ENCODE measurements at regions of chr5 and their contacts with region 1.

Region 1: DNA sequence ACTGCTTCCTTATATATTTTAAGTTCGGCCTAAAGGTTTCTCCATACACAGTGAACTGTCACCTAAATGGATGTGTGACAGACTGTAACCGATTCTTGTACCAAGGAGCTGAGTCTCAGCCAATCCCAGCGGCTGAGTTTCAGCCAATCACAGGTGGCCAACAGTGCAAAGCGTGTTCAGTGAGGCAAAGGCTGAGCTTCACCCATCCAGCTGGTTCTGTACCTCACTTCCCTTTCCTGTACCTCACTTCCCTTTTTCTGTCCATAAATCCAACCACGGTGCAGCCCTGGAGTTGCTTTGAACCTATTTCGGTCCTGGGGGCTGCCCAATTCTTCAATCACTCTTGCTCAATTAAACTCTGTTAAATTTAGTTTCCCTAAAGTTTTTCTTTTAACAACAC is 15.7 kb upstream of the TBC1D9B start:
- DNase-seq: no peak
- ATAC-seq: no peak
- H3K4me3 ChIP-seq: no peak overlapping the region
- H3K27ac ChIP-seq: no peak overlapping the region
- H3K4me1 ChIP-seq: no peaks in the 10 kb centered on the region
- H3K27me3 ChIP-seq: no peaks in the 10 kb centered on the region
- CTCF ChIP-seq: no peak
- POLR2A ChIP-seq: no peak
- RAD21 ChIP-seq: no peak

Region 2: GRCh38 chr5:179678223-179679013 is 245.0 kb before region 1 on chr5:
- CTCF ChIA-PET with region 1: no interaction called
- POLR2A ChIA-PET with region 1: interaction called, 23 read pairs
- dilution Hi-C with region 1: no loop called
- in situ Hi-C with region 1: no loop called
- intact Hi-C with region 1: no loop called
- DNase-seq: peak; percentile 93
- ATAC-seq: peak; percentile 97
- H3K4me3 ChIP-seq: peak overlapping the region; percentile 69
- H3K27ac ChIP-seq: peak overlapping the region; percentile 94
- H3K4me1 ChIP-seq: peaks cover 4% of the 10 kb centered on the region
- H3K27me3 ChIP-seq: no peaks in the 10 kb centered on the region
- CTCF ChIP-seq: no peak
- POLR2A ChIP-seq: peak; percentile 67; the same call in 1 of the 2 replicates
- RAD21 ChIP-seq: peak; percentile 12; the same call in 1 of the 2 replicates

Region 3: DNA sequence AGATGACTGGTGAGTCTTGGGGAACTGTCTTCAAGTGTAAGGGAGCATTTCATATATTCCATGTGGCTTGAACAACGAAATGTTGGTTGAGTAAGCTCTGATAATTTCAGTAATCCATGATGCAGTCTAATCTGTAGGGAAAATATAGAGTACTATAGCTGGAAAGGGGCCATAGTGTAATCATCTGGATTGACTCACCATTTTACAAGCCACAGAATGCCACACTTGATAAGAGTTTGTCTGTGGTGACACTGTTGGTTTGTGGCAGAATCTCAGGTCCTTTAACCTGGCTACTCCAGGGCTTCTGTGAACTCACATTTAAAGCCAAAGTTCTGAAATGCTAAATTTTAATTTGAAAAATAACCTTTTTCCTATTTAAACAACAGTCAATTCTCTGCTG is 207.2 kb before region 1 on chr5:
- CTCF ChIA-PET with region 1: no interaction called
- POLR2A ChIA-PET with region 1: no interaction called
- dilution Hi-C with region 1: no loop called
- in situ Hi-C with region 1: no loop called
- intact Hi-C with region 1: no loop called
- DNase-seq: peak; percentile 35
- ATAC-seq: no peak
- H3K4me3 ChIP-seq: no peak overlapping the region
- H3K27ac ChIP-seq: no peak overlapping the region
- H3K4me1 ChIP-seq: no peaks in the 10 kb centered on the region
- H3K27me3 ChIP-seq: no peaks in the 10 kb centered on the region
- CTCF ChIP-seq: no peak
- POLR2A ChIP-seq: no peak
- RAD21 ChIP-seq: no peak

Region 4: DNA sequence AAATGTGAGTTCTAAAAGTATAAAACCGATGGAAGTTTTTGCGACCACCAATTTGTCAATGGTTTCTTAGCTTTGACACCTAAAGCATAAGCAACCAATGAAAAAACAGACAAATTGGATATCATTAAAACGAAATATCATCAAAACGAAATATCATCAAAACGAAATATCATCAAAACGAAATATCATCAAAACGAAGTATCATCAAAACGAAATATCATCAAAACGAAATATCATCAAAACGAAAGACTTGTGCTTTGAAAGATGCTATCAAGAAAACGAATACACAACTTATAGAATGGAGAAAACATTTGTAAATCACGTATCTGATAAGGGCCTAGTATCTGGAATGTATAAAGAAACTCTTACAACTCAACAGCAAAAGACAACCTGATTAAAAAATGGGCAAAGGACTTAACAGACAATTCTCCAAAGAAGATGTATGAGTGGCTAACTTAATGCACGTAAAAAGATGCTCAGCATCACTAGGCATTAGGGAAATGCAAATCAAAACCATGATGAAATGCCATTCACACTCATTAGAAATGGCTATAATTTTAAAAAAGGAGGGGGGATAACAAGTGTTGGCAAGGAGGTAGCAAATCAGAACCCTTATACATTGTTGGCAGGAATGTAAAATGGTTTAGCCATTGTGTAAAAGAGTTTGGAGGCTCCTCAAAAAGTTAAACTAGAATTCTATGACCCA is 13.7 kb after region 1 on chr5:
- CTCF ChIA-PET with region 1: no interaction called
- POLR2A ChIA-PET with region 1: no interaction called
- dilution Hi-C with region 1: no loop called
- in situ Hi-C with region 1: no loop called
- intact Hi-C with region 1: no loop called
- DNase-seq: no peak
- ATAC-seq: no peak
- H3K4me3 ChIP-seq: no peak overlapping the region
- H3K27ac ChIP-seq: no peak overlapping the region
- H3K4me1 ChIP-seq: no peaks in the 10 kb centered on the region
- H3K27me3 ChIP-seq: no peaks in the 10 kb centered on the region
- CTCF ChIP-seq: no peak
- POLR2A ChIP-seq: no peak
- RAD21 ChIP-seq: no peak

Region 5: GRCh38 chr5:179967489-179967888 is 44.1 kb after region 1 on chr5:
- CTCF ChIA-PET with region 1: interaction called, 13 read pairs
- POLR2A ChIA-PET with region 1: no interaction called
- dilution Hi-C with region 1: no loop called
- in situ Hi-C with region 1: no loop called
- intact Hi-C with region 1: no loop called
- DNase-seq: peak; percentile 20
- ATAC-seq: peak; percentile 53; the same call in 1 of the 2 replicates
- H3K4me3 ChIP-seq: no peak overlapping the region
- H3K27ac ChIP-seq: no peak overlapping the region
- H3K4me1 ChIP-seq: no peaks in the 10 kb centered on the region
- H3K27me3 ChIP-seq: no peaks in the 10 kb centered on the region
- CTCF ChIP-seq: no peak
- POLR2A ChIP-seq: no peak
- RAD21 ChIP-seq: no peak

Measured in IMR-90 (cell line).